Left cardiac atrium (tissue), 4 donors: ENCODE measurements at regions of chr18 and their contacts with region 1.

Region 1: DNA sequence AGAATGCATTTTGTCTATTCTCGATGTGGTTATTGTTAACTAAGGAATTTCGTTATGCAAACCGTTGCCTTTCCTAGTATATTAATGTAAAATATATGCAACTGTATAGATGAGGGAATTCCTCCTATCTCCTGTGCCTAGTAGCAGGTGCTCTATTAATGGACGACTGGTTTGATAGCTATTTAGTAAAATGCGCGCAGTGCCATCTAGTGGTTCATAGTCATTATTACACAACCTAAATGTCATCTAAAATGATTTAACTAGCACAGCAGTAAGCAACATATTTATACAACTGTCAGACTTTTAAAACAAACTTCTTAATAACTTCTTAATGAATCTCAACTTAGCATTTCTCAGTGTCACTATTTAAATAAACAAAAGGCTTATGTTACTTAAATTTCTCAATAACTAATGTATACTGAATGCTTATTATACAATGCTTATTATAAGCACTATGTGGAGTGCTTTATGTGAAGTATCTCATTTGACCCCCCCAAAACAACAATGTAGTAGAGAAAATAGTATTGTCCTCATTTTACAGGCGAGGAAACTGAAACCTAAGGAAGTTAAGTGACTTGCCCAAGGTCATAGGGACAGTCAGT is 77.9 kb downstream of the DTNA start:
- DNase-seq: no peak
- ATAC-seq: peak in 1 of 2 donors; percentile 61

Region 2: GRCh38 chr18:34122724-34123334 is 665.2 kb before region 1 on chr18:
- intact Hi-C with region 1: loop called in 1 of 2 experiments (anchors 10 kb)
- DNase-seq: no peak
- ATAC-seq: peak in 1 of 2 donors; percentile 40

Region 3: GRCh38 chr18:34352385-34353163 is 435.5 kb before region 1 on chr18:
- intact Hi-C with region 1: loop called (anchors 5 to 10 kb)
- DNase-seq: no peak
- ATAC-seq: no peak

Region 4: DNA sequence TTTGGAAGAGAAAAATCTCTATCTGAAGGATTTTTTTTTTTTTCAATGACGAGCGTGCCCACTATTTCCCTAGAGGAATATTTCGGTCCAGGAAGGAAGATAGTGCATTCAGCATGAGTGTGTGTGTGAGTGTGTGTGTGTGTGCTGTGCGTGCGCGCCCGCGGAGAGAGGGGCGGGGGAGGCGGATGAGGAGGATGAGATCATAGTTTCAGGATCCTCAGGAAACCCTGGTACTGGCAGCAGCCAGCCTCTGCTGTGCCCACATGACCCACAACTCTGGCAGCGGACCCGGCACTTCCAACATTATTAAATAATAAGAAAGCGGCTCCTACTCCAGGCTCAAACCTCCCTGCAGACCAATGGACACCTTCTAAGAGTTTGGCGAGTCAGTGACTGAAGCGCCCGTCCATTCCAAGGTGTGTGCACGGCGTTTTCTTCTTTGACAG is 294.9 kb before region 1 on chr18:
- intact Hi-C with region 1: loop called in 1 of 2 experiments (anchors 10 kb)
- DNase-seq: peak; percentile 83
- ATAC-seq: peak; percentile 92 to 96

Region 5: GRCh38 chr18:34592961-34593382 is 195.1 kb before region 1 on chr18:
- intact Hi-C with region 1: loop called in 1 of 2 experiments (anchors 5 kb)
- DNase-seq: peak; percentile 63
- ATAC-seq: peak; percentile 96

Region 6: DNA sequence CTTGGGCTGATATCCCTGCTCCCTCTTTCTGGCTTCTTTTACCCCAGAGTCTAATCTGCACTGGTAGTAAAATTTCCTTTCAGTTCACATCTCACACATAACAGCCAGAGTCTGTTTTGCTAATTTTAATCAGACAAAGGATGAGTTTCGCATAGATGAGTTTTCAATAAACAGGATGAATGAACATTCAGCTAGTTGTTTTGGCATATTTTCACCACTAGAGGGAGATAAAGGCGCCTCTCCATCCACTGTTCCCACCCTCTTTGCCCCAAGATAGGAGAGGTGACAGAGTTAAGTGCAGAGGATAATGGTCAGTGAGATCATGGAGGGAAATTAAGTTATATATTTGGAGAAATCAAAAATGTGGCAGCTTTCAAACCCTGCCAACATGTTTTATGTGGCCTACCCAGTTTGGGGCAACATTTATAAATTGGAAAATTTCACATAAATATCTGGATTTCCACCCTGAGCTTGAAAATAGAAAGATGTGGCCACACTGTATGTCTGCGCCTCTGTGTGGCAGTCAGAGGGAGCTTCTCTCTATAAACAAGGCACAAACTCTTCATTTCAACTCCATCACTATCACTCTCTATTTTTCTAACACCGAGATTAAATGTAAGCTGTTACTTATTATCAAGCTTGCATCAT is 126.4 kb before region 1 on chr18:
- intact Hi-C with region 1: loop called in 1 of 2 experiments (anchors 5 kb)
- DNase-seq: no peak
- ATAC-seq: peak; percentile 66 to 67

Region 7: GRCh38 chr18:34676816-34677574 is 111.0 kb before region 1 on chr18:
- intact Hi-C with region 1: loop called in 1 of 2 experiments (anchors 10 kb)
- DNase-seq: no peak
- ATAC-seq: no peak